ENCODE measurements at regions of chr1 and their contacts with region 1.

Region 1: DNA sequence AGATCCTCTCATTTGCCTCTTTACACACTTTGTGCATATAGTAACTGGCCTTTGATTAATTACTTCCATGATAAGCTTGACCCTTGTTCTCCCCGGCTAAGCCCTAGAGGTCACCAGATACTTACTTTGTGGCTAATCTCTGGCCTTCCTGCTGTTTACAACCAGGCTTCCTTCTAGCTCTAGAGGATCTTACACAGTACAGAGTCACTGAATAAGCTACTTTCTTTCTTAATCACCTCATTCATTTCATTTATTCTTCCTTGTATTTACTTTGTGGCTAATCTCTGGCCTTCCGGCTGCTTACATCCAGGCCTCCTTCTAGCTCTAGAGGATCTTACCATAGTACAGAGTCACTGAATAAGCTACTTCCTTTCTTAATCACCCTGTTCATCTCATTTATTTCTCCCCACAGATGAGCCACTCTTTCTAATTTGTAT is 144.3 kb upstream of the C1orf21 start:
- DNase-seq: peak in 6 of 7 donors; percentile 32 to 56 (median 44)
- H3K4me3 ChIP-seq: no peak overlapping the region
- H3K27ac ChIP-seq: no peak overlapping the region
- H3K4me1 ChIP-seq: peaks cover 0 to 12% of the 10 kb centered on the region in 2 donors
- H3K27me3 ChIP-seq: no peaks in the 10 kb centered on the region
- CTCF ChIP-seq: peak in 4 of 6 experiments; percentile 22 to 43 (median 34)
- POLR2A ChIP-seq: no peak

Region 2: GRCh38 chr1:184061396-184062003 is 181.0 kb before region 1 on chr1:
- intact Hi-C with region 1: no loop called
- DNase-seq: no peak
- H3K4me3 ChIP-seq: no peak overlapping the region
- H3K27ac ChIP-seq: no peak overlapping the region
- H3K4me1 ChIP-seq: peaks cover 0 to 6% of the 10 kb centered on the region in 2 donors
- H3K27me3 ChIP-seq: no peaks in the 10 kb centered on the region
- CTCF ChIP-seq: no peak
- POLR2A ChIP-seq: no peak

Region 3: GRCh38 chr1:184684285-184685074 is 442.0 kb after region 1 on chr1:
- intact Hi-C with region 1: loop called in 1 of 2 experiments (anchors 10 kb)
- DNase-seq: peak in 2 of 7 donors; percentile 36 to 40
- H3K4me3 ChIP-seq: no peak overlapping the region
- H3K27ac ChIP-seq: no peak overlapping the region
- H3K4me1 ChIP-seq: peaks cover 0 to 11% of the 10 kb centered on the region in 2 donors
- H3K27me3 ChIP-seq: no peaks in the 10 kb centered on the region
- CTCF ChIP-seq: no peak
- POLR2A ChIP-seq: no peak

Measured in adrenal gland (tissue), 19 donors.